ENCODE measurements at regions of chr17 and their contacts with region 1.

Region 1: GRCh38 chr17:60049936-60050335 is 28.8 kb downstream of the HEATR6 start:
- DNase-seq: no peak

Region 2: GRCh38 chr17:59914274-59914854 is 135.6 kb before region 1 on chr17:
- intact Hi-C with region 1: loop called in 1 of 2 experiments (anchors 10 kb)
- DNase-seq: no peak

Measured in posterior vena cava (tissue), 2 donors.